IMR-90 (cell line): ENCODE measurements at regions of chr3 and their contacts with region 1.

Region 1: GRCh38 chr3:38640661-38641452 is 8.6 kb downstream of the SCN5A start:
- DNase-seq: no peak
- ATAC-seq: no peak
- H3K4me3 ChIP-seq: no peak overlapping the region
- H3K27ac ChIP-seq: no peak overlapping the region
- H3K4me1 ChIP-seq: no peaks in the 10 kb centered on the region
- H3K27me3 ChIP-seq: no peaks in the 10 kb centered on the region; the same call in 1 of the 2 replicates
- CTCF ChIP-seq: no peak
- POLR2A ChIP-seq: no peak
- RAD21 ChIP-seq: no peak

Region 2: GRCh38 chr3:39013289-39013688 is 372.4 kb after region 1 on chr3:
- CTCF ChIA-PET with region 1: no interaction called
- POLR2A ChIA-PET with region 1: interaction called, 10 read pairs
- dilution Hi-C with region 1: no loop called
- in situ Hi-C with region 1: no loop called
- intact Hi-C with region 1: no loop called
- DNase-seq: peak; percentile 36
- ATAC-seq: peak; percentile 27; the same call in 1 of the 2 replicates
- H3K4me3 ChIP-seq: no peak overlapping the region
- H3K27ac ChIP-seq: no peak overlapping the region
- H3K4me1 ChIP-seq: no peaks in the 10 kb centered on the region
- H3K27me3 ChIP-seq: no peaks in the 10 kb centered on the region
- CTCF ChIP-seq: no peak
- POLR2A ChIP-seq: no peak
- RAD21 ChIP-seq: no peak